Sigmoid colon (tissue), 7 donors: ENCODE measurements at regions of chr1 and their contacts with region 1.

Region 1: DNA sequence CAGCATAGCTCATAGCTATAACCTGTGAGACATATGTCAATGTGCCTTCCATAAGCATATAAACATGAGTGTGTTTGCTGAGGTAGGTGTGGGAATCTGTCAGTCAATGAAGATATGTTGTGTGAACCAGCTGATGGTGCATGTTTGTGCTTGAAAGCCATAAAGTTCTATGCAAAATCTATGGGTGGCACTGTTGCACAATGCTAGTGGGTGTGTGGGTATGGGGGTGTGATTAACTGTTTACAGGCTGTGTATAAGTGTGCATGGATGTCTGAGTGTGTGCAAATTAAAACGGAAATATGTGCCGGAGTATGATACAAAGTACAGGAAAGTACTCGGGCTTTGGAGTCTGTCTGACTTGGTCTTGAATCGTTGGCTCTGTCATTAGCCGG is 1.0 kb upstream of the ATP2B4 start:
- DNase-seq: no peak
- H3K4me3 ChIP-seq: peak overlapping the region in 3 of 4 donors; percentile 71 to 88 (median 84)
- H3K27ac ChIP-seq: peak overlapping the region; percentile 88 to 98 (median 94)
- H3K4me1 ChIP-seq: peaks cover 0 to 33% (median 26%) of the 10 kb centered on the region in 4 donors
- H3K27me3 ChIP-seq: no peaks in the 10 kb centered on the region
- CTCF ChIP-seq: peak in 2 of 4 experiments; percentile 18 to 34
- EP300 ChIP-seq: no peak
- POLR2A ChIP-seq: no peak

Region 2: GRCh38 chr1:203558064-203558760 is 67.4 kb before region 1 on chr1:
- intact Hi-C with region 1: loop called (anchors 2 kb)
- DNase-seq: peak; percentile 91
- H3K4me3 ChIP-seq: no peak overlapping the region
- H3K27ac ChIP-seq: peak overlapping the region; percentile 89 to 97 (median 92)
- H3K4me1 ChIP-seq: peaks cover 0 to 65% (median 63%) of the 10 kb centered on the region in 4 donors
- H3K27me3 ChIP-seq: no peaks in the 10 kb centered on the region
- CTCF ChIP-seq: no peak
- EP300 ChIP-seq: peak; percentile 80 to 99 (median 86)
- POLR2A ChIP-seq: no peak

Region 3: GRCh38 chr1:203673550-203674427 is 48.2 kb after region 1 on chr1:
- intact Hi-C with region 1: loop called (anchors 2 kb)
- DNase-seq: peak; percentile 82
- H3K4me3 ChIP-seq: no peak overlapping the region
- H3K27ac ChIP-seq: peak overlapping the region; percentile 83 to 98 (median 88)
- H3K4me1 ChIP-seq: peaks cover 0 to 99% (median 99%) of the 10 kb centered on the region in 4 donors
- H3K27me3 ChIP-seq: no peaks in the 10 kb centered on the region
- CTCF ChIP-seq: no peak
- EP300 ChIP-seq: no peak
- POLR2A ChIP-seq: no peak

Region 4: DNA sequence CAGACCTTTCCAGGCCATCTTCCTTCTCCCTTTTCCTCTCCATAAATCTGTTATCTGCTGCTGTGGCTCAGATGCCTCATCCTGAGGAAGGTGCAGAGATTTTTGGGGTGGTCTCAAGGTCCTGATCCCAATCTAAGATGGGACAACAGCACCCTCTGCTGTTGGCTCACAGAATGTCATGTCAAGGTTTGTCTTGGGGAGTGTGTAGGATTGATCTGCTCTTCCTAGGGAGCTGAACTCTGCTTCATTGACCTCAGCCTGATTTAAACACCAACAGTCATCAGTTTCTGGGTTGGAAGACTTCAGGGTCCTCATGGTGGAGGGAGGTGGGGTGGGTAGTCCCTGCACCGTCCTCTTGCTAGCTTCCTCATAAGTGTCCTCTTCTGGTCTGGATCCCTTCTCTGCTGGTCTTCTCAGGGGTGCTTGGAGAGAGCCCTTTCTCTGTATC is 76.5 kb after region 1 on chr1:
- intact Hi-C with region 1: loop called (anchors 2 kb)
- DNase-seq: peak; percentile 76
- H3K4me3 ChIP-seq: no peak overlapping the region
- H3K27ac ChIP-seq: peak overlapping the region; percentile 87 to 93 (median 88)
- H3K4me1 ChIP-seq: peaks cover 0 to 77% (median 65%) of the 10 kb centered on the region in 4 donors
- H3K27me3 ChIP-seq: no peaks in the 10 kb centered on the region
- CTCF ChIP-seq: peak; percentile 78 to 97 (median 94)
- EP300 ChIP-seq: no peak
- POLR2A ChIP-seq: no peak

Region 5: GRCh38 chr1:204128964-204129896 is 503.6 kb after region 1 on chr1:
- intact Hi-C with region 1: no loop called
- DNase-seq: peak; percentile 91
- H3K4me3 ChIP-seq: peak overlapping the region in 3 of 4 donors; percentile 15 to 33 (median 24)
- H3K27ac ChIP-seq: peak overlapping the region; percentile 27 to 56 (median 42)
- H3K4me1 ChIP-seq: peaks cover 0 to 50% (median 40%) of the 10 kb centered on the region in 4 donors
- H3K27me3 ChIP-seq: no peaks in the 10 kb centered on the region
- CTCF ChIP-seq: peak; percentile 86 to 97 (median 92)
- EP300 ChIP-seq: no peak
- POLR2A ChIP-seq: no peak